ENCODE measurements at regions of chr6 and their contacts with region 1.

Region 1: DNA sequence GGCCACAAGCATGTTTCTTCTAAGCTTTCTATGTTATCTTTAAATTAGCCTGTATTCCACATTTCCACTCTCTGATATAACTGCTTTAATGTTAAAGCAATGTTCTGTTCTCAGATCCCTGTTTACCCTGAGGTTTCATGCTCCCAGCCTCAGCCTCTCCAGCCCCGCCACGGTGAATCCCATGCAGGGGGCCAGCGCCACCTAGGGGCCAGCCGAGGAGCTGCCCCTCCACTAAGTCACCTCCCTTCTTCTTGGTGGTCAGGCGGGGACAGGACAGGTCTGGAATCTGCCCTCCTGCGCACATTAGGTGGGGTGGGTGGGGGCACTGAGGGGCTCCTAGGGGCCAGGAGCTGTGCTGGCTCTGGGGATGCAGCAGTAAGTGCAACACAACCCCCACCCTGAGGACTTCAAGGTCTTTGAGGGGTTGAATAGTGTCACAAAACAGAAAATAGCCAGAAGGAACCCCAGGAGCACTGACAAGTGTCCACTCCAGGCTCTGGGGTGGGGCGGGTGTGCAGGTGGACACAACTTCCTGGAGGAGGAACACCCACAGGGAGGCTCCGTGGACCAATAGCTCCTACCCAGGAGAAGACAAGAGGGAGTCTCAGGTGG is 61.6 kb downstream of the RAB44 start:
- DNase-seq: peak; percentile 85
- ATAC-seq: peak; percentile 61
- H3K4me3 Mint-ChIP-seq: no peak overlapping the region
- H3K27ac Mint-ChIP-seq: no peak overlapping the region
- H3K4me1 Mint-ChIP-seq: peaks cover 46% of the 10 kb centered on the region
- H3K27me3 Mint-ChIP-seq: no peaks in the 10 kb centered on the region

Region 2: GRCh38 chr6:36615018-36615761 is 144.1 kb before region 1 on chr6:
- CTCF ChIA-PET with region 1: interaction called, 112 read pairs
- DNase-seq: peak; percentile 55
- ATAC-seq: peak; percentile 52
- H3K4me3 Mint-ChIP-seq: no peak overlapping the region
- H3K27ac Mint-ChIP-seq: peak overlapping the region; percentile 4
- H3K4me1 Mint-ChIP-seq: peaks cover 13% of the 10 kb centered on the region
- H3K27me3 Mint-ChIP-seq: no peaks in the 10 kb centered on the region

Region 3: DNA sequence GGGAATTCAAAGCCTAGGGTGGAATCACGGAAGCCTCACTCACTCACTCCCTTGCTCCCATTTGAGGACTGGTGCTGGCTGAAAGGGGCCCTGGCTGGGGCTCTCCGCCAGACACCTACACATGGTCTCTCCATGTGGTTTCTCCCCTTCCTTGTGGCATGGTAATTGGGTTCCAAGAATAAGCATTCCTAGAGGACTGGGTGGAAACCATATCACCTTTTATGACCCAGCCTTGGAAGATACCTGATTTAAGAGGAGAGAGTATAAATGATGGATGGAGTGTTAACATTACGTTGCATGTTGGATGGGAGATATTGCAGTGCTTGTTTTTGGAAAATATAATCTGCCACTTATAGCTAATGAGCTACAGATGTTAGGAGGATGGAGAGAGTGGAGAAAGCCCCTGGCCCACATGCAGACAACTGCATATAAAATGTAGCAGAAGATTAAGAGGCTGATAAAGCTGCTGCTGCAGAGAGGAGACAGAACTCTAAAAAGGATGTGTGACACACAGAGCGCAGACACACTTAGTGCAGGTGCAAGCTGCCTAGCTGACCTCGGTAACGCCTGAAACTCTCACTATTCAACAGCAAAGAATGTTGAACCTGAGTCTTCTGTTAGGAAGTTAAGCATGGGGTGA is 104.0 kb before region 1 on chr6:
- CTCF ChIA-PET with region 1: no interaction called
- DNase-seq: no peak
- ATAC-seq: no peak
- H3K4me3 Mint-ChIP-seq: no peak overlapping the region
- H3K27ac Mint-ChIP-seq: no peak overlapping the region
- H3K4me1 Mint-ChIP-seq: no peaks in the 10 kb centered on the region
- H3K27me3 Mint-ChIP-seq: peaks cover 78% of the 10 kb centered on the region

Region 4: DNA sequence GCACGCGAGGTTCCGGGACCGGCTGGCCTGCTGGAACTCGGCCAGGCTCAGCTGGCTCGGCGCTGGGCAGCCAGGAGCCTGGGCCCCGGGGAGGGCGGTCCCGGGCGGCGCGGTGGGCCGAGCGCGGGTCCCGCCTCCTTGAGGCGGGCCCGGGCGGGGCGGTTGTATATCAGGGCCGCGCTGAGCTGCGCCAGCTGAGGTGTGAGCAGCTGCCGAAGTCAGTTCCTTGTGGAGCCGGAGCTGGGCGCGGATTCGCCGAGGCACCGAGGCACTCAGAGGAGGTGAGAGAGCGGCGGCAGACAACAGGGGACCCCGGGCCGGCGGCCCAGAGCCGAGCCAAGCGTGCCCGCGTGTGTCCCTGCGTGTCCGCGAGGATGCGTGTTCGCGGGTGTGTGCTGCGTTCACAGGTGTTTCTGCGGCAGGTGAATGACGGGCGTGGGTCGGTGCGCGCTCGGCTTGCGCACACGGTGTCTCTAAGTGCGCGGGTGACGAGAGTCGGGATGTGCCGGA is 80.7 kb before region 1 on chr6 and contains the start of gene CDKN1A:
- CTCF ChIA-PET with region 1: interaction called, 60 read pairs
- DNase-seq: peak; percentile 87
- ATAC-seq: peak; percentile 71
- H3K4me3 Mint-ChIP-seq: peak within 1 kb of the TSS; percentile 97
- H3K27ac Mint-ChIP-seq: peak within 1 kb of the TSS; percentile 98
- H3K4me1 Mint-ChIP-seq: peaks cover 61% of the 10 kb centered on the region
- H3K27me3 Mint-ChIP-seq: no peaks in the 10 kb centered on the region
- total RNA-seq, gene CDKN1A: 67.5 to 109 TPM

Region 5: DNA sequence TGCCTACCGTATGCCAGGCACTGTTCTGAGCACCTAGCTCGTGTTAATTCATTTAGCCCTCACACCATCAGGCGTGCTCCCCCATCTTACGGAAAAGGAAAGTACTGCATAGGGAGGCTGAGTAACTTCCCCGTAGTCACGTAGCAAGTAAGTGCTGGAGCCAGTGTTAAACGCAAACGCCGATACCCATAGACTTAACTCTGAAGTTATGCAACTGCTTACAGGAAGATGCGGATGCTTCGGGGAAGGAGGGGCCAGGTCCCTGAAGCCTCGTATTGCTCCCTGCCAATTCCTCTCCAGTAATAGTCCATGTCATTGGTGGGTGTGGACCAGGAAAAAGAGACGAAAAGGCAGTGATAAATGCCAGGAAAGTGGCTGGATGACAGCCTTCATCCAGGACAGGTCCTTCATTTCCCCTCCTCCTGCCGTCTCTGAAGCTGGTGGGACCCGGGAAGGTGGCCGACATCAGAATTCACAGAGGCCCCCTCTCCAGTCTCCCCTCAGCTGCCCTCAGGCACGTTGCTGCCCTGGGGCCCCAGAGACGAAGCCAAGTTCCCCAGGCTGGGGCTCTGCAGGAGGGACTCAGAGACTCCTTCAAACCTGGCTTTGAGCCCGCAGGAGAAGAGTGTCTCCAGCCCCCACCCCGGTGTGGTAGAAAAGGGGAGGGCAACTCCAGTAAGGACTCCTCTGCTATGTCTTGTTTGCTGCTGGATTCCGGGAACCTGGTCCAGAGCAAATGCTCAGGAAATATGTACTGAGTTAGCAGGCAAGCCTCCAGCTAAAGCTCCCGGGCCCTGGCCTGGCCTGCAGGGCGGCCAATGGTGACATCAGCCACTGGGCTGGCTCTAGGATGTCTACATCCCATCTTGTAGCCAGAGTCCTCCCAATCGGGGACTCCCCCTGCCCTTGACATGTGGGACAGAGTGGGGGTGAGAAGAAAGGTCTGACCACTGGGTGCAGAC is 23.9 kb before region 1 on chr6:
- CTCF ChIA-PET with region 1: interaction called, 33 read pairs
- DNase-seq: peak; percentile 64
- ATAC-seq: peak; percentile 82
- H3K4me3 Mint-ChIP-seq: peak overlapping the region; percentile 13
- H3K27ac Mint-ChIP-seq: peak overlapping the region; percentile 56
- H3K4me1 Mint-ChIP-seq: peaks cover 9% of the 10 kb centered on the region
- H3K27me3 Mint-ChIP-seq: no peaks in the 10 kb centered on the region

Region 6: DNA sequence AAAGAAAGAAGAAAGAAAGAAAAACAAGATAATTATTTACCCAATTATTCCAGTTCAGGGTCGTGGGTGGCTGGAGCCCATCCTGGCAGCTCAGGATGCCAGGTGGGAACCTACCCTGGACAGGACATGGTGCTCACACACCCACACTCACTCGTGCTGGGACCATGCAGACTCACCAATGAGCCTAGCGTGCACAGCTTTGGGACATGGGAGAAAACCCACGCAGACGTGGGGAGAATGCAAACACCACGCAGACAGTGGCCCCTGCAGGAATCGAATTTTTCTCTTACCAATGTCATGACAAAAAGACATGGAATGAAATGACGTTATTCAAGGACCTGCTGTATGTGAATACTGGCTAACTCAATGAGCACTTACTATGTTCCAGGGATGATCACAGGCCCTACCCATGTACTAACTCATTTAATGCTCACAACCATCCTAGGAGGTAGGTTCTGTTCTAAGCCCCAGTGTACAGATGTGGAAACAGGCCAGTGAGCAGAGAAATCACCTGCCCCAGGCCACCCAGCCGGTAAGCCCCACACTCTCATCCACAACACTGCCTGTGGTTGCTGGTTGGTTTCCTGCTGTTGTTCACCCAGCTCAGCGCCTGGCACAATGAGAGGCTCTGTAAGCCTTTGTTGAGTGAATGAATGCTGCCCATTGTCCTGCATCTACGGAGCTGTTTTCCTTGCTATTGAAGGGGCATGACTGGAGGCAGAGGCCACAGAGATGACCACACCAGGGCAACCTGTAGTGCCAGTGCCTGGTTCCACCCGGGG is 188.5 kb after region 1 on chr6:
- CTCF ChIA-PET with region 1: no interaction called
- DNase-seq: peak; percentile 81
- ATAC-seq: peak; percentile 90
- H3K4me3 Mint-ChIP-seq: no peak overlapping the region
- H3K27ac Mint-ChIP-seq: peak overlapping the region; percentile 29
- H3K4me1 Mint-ChIP-seq: peaks cover 44% of the 10 kb centered on the region
- H3K27me3 Mint-ChIP-seq: peaks cover 8% of the 10 kb centered on the region

Measured in activated CD8-positive, alpha-beta memory T cell treated with anti-CD3 and anti-CD28 coated beads, Interleukin-2, amount 10 ng/mL, durations not matched to agents 7 days and 5 days (primary cell).